AG04449 (cell line): ENCODE measurements at regions of chr9 and their contacts with region 1.

Region 1: DNA sequence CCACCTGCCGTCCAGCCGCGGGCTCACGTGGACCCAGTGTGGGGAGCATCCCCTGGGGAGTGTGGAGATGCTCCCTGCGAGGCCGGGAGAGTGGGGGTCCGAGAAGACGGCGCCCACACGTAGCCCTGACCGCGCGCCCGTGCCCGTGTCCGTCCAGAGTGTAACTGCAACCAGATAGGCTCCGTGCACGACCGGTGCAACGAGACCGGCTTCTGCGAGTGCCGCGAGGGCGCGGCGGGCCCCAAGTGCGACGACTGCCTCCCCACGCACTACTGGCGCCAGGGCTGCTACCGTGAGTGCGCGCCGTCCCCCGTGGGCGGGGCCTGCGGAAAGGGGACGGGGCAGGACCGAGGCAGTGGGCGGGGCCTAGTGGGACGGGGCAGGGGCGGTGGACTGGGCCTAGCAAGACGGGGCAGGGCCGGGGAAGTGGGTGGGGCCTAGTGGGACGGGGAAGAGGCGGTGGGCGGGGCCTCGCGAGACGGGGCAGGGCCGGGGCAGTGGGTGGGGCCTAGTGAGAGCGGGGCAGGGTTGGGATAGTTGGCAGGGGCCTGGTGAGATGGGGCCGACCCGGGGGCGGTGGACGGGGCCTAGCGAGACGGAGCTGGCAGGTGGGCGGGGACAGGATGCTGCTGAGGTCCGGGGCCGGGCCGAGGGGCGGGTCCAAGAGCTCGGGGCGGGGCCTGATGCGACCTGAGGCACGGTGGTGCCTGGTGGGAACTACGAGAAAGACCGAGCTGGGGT is 79.1 kb downstream of the NTNG2 start:
- DNase-seq: peak; percentile 28
- H3K4me3 ChIP-seq: peak overlapping the region; percentile 61
- CTCF ChIP-seq: no peak

Region 2: GRCh38 chr9:131755541-131756198 is 485.3 kb before region 1 on chr9:
- CTCF ChIA-PET with region 1: interaction called, 370 read pairs
- POLR2A ChIA-PET with region 1: no interaction called
- DNase-seq: no peak
- H3K4me3 ChIP-seq: no peak overlapping the region
- CTCF ChIP-seq: peak; percentile 96

Region 3: GRCh38 chr9:132169672-132170392 is 71.1 kb before region 1 on chr9:
- CTCF ChIA-PET with region 1: interaction called, 125 read pairs
- POLR2A ChIA-PET with region 1: no interaction called
- DNase-seq: no peak
- H3K4me3 ChIP-seq: no peak overlapping the region
- CTCF ChIP-seq: peak; percentile 83

Region 4: DNA sequence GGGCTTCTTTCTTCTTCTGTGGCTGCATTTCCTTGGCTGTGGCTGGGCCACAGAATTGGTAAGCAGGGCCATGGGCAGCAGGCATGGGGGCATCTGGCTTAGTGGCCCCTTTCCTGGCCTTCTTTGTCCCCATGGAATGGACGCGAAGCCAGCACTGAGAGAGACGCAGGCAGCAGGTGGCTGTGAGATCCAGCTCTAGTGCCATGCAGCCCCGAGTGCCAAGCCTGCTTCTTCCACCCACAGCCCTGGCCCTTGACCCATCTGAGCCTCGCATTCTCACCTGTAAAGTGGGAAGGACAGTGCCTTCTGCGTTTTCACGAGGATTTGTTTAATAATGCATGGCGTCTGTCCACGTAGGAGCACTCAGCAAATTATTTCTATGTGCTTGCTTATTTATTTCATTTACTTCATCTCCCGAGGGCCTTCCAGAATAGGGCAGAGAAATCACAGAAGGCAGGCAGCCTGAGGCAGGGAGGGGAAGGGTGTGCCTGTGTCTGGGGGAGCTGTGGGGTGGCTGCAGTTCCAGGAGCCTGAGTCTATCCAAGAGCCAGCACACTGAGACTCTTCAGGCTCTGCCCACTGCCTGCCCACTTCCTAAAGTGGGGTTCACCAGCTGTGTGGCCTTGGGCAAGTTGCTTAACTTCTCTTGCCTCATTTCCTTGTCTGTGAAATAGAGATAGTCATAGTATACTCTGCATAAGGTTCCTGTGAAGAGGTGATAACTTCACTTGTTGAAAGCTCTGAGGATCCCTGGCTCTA is 23.9 kb before region 1 on chr9:
- CTCF ChIA-PET with region 1: interaction called, 105 read pairs
- POLR2A ChIA-PET with region 1: no interaction called
- DNase-seq: no peak
- H3K4me3 ChIP-seq: no peak overlapping the region
- CTCF ChIP-seq: no peak

Region 5: GRCh38 chr9:132228062-132228461 is 12.9 kb before region 1 on chr9:
- CTCF ChIA-PET with region 1: interaction called, 105 read pairs
- POLR2A ChIA-PET with region 1: no interaction called
- DNase-seq: no peak
- H3K4me3 ChIP-seq: no peak overlapping the region
- CTCF ChIP-seq: no peak

Region 6: GRCh38 chr9:132260846-132261245 is 19.9 kb after region 1 on chr9:
- CTCF ChIA-PET with region 1: interaction called, 14 read pairs
- POLR2A ChIA-PET with region 1: no interaction called
- DNase-seq: no peak
- H3K4me3 ChIP-seq: no peak overlapping the region
- CTCF ChIP-seq: no peak

Region 7: DNA sequence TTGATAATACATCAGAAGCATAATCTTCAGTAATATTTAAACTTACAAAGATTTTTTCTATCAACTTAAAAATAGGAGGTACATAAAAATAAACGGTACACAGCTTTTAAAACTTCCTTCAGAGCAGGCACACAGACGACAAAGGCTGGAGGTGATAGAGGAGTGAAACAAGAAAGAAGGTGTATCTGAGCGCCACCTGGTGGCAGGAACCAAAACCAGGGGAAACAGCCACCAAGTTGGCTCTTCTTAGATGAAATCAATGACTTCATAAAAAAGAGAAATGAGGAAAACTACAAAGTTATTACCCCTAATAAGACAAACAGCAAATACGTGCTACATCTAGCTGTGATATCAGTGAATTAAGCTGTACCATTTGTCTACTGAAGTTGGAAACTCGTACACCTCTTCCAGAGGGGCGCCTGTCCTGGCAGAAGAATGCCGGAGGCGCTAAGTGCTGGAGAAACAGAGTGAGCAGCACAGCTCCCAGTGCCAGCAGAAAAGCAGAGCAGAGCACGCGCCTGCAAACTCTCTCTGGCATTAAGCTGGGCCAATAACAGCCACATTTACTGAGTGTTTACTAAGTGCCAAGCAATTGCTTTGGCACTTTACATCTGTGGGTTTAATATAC is 27.9 kb after region 1 on chr9:
- CTCF ChIA-PET with region 1: interaction called, 10 read pairs
- POLR2A ChIA-PET with region 1: no interaction called
- DNase-seq: no peak
- H3K4me3 ChIP-seq: no peak overlapping the region
- CTCF ChIP-seq: peak; percentile 77

Region 8: DNA sequence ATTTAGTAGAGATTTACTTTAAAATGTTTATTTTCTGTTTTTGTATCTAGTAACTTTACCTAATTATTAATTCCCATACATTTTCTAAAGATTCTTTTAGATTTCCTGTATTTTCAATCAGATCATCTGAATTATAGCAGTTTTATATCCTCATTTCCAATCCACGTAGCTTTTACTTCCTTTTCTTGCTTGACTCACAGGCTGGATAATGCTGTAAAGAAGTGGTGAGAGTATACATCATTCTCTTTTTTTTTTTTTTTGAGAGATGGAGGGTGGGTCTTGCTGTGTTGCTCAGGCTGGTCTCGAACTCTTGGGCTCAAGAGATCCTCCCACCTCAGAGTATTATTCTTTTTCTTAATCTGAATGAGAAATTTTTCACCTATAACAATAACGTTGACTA is 125.1 kb after region 1 on chr9:
- CTCF ChIA-PET with region 1: no interaction called
- POLR2A ChIA-PET with region 1: no interaction called
- DNase-seq: no peak
- H3K4me3 ChIP-seq: no peak overlapping the region
- CTCF ChIP-seq: no peak